Activated T-helper 1 cell treated with anti-CD3 and anti-CD28 coated beads, Interleukin-12 subunit alpha, Interleukin-12 subunit beta, Interleukin-2, Interleukin-4 antibody, amounts not matched to agents 30 ng/mL and 10 ng/mL and 1 ng/mL, durations not matched to agents 14 hours and 24 hours and 36 hours (primary cell): ENCODE measurements at regions of chr17 and their contacts with region 1.

Region 1: GRCh38 chr17:78806451-78806850 is 24.4 kb upstream of the CYTH1 start:
- DNase-seq: no peak
- H3K4me3 Mint-ChIP-seq: peak overlapping the region; percentile 2
- H3K27ac Mint-ChIP-seq: peak overlapping the region; percentile 79
- H3K4me1 Mint-ChIP-seq: peaks cover 41% of the 10 kb centered on the region
- H3K27me3 Mint-ChIP-seq: no peaks in the 10 kb centered on the region

Region 2: GRCh38 chr17:78186692-78187595 is 619.5 kb before region 1 on chr17 and contains the starts of genes AFMID and TK1:
- intact Hi-C with region 1: no loop called
- DNase-seq: peak; percentile 87
- H3K4me3 Mint-ChIP-seq: peak within 1 kb of the TSS; percentile 95
- H3K27ac Mint-ChIP-seq: peak within 1 kb of the TSS; percentile 86
- H3K4me1 Mint-ChIP-seq: peaks cover 47% of the 10 kb centered on the region
- H3K27me3 Mint-ChIP-seq: no peaks in the 10 kb centered on the region
- total RNA-seq, gene AFMID: 26.2 and 27.7 TPM in 2 replicates
- total RNA-seq, gene TK1: 65.8 and 66.8 TPM in 2 replicates

Region 3: DNA sequence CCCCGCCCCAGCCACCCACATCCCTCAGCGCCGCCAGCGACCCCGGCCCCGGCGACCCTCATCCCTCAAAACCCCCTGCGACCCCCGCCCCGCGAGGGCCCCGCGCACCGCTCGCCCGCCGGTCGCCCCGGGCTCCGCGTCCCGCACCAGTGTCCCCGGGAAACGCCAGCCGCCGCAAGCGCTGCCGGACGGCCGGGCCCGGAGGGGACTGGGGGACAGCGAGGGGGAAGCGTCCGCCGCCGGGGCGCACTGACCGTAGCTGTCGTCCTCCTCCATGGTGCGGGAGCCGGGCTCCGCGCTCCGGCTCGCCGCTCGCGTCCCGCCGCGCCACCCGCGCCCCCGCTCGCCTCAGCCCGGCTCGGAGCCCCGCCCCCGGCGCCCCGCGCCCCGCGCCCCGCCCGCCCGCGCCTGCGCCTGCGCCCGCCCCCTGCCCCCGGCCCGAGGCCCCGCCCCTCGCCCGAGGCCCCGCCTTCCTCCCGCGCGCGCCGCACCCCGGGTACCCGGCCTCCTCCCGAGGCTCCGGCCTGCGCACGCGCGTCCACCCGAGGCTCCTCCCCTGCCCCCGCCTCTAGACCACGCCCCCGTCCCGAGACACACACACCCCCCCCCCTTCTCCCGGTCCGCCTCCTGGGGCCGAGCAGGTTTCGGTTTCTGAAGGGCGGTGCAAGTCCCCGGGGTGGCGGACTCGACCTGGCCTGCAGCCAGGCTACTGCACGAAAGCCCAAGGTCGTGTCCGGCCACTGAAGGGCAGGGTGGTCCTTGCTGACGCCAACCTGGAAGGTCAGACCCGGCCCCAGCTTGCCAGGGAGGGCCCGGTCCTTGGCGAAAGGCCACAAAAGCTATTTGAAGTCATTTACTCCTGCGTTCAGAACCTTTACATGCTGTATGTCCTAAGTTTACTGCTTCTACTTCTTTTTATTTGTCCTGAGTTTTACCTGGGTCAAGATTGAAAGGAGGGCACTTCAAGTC is 24.2 kb before region 1 on chr17 and contains the start of gene CYTH1:
- intact Hi-C with region 1: loop called (anchors 2 kb)
- DNase-seq: peak; percentile 96
- H3K4me3 Mint-ChIP-seq: peak within 1 kb of the TSS; percentile 90
- H3K27ac Mint-ChIP-seq: peak within 1 kb of the TSS; percentile 91
- H3K4me1 Mint-ChIP-seq: peaks cover 51% of the 10 kb centered on the region
- H3K27me3 Mint-ChIP-seq: no peaks in the 10 kb centered on the region
- total RNA-seq, gene CYTH1: 147 TPM in 2 replicates

Region 4: DNA sequence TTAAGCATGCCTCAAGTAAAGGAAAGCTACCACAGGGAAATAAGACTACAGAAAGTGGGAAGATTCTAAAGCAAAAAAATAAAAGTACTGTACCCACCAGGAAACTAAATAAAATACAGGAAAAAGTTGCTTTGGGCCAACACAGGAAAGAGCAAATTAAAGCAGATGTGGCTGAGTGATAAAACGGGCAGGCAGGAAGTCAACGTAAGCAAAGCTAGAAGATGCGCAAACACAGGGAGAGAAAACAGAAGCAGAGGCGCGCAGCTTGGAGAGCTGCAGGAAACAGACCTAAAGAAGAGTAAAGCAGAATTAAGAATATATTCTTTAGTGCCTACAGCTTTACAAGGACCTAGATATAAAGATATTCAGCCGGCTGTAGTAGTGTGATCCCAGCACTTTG is 12.5 kb after region 1 on chr17:
- intact Hi-C with region 1: loop called (anchors 1 kb)
- DNase-seq: peak; percentile 64
- H3K4me3 Mint-ChIP-seq: peak overlapping the region; percentile 74
- H3K27ac Mint-ChIP-seq: peak overlapping the region; percentile 91
- H3K4me1 Mint-ChIP-seq: peaks cover 53% of the 10 kb centered on the region
- H3K27me3 Mint-ChIP-seq: no peaks in the 10 kb centered on the region

Region 5: DNA sequence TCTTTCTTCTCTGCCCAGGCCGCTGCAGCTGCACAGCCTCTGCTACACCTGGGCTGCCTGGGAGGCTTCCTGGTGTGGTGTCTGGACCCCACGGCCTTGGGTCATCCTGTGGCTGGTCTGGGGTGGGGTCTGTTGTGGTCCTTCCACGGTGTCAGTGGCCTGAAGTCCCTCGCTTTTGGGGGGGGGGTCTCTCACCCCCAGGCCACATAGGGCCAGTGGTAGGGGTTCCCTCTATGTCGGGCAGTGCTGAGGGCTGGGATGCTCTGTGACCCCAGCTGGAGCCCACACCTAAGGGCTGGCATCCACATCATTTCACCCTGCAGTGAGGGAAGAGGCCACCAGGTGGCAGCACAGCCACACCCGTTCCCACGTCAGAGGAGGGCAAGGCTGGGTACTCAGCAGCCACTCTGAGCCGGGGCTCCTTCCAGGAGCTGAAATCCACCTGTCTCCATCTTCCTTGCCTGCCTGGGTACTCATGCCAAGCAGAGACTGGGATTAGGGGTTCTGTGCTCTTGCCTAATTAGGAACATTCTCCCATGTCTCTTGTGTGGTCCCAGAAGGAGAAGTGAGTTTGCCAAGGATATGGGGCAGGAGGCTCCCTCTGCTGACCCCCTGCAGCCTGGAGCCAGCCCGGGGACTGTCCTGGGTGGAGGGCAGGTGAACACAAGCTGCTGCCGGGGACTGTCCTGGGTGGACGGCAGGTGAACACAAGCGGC is 281.1 kb after region 1 on chr17:
- intact Hi-C with region 1: no loop called
- DNase-seq: peak; percentile 53
- H3K4me3 Mint-ChIP-seq: no peak overlapping the region
- H3K27ac Mint-ChIP-seq: no peak overlapping the region
- H3K4me1 Mint-ChIP-seq: no peaks in the 10 kb centered on the region
- H3K27me3 Mint-ChIP-seq: peaks cover 2% of the 10 kb centered on the region